ENCODE measurements at regions of chr13 and their contacts with region 1.

Region 1: DNA sequence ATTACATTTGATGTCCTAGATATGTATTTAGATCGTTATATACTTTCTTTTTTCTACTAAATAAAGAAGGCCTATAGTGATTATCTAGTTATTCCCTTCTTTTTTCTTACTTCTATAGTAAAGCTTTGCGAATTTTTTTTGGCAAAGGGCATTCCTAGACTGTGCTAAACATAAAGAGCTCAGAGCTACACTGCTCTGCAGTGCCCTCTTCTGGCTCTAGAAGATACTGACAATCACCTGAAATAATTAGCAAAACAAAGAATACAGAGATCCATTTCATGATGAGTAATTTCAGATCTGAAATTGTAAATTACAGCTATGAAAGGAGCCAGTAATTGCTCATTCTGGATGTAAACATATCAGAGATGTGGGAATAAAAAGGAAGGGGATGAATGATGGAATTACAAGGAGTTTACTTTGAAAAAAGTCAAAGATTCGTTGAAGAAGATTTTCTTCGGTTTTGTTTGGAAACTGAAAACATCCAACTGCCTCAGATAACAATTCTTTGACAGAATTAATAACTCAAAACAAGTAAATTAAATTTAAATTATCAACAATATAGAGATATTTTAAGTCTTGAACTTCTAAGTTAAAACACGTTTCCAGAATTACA is 288.5 kb downstream of the NALCN start:
- DNase-seq: no peak
- ATAC-seq: peak; percentile 87
- H3K4me3 Mint-ChIP-seq: no peak overlapping the region
- H3K27ac Mint-ChIP-seq: peak overlapping the region; percentile 82; the same call in 1 of the 2 replicates
- H3K4me1 Mint-ChIP-seq: peaks cover 23% of the 10 kb centered on the region
- H3K27me3 Mint-ChIP-seq: no peaks in the 10 kb centered on the region
- CTCF ChIP-seq: 0 out of 2 replicates have a peak, but pooled peaks have one; percentile 51

Region 2: GRCh38 chr13:100176801-100177400 is 950.9 kb before region 1 on chr13:
- CTCF ChIA-PET with region 1: no interaction called
- POLR2A ChIA-PET with region 1: no interaction called
- DNase-seq: no peak
- ATAC-seq: no peak
- H3K4me3 Mint-ChIP-seq: no peak overlapping the region
- H3K27ac Mint-ChIP-seq: no peak overlapping the region
- H3K4me1 Mint-ChIP-seq: peaks cover 46% of the 10 kb centered on the region
- H3K27me3 Mint-ChIP-seq: no peaks in the 10 kb centered on the region
- CTCF ChIP-seq: no peak

Region 3: GRCh38 chr13:101115762-101116171 is 12.1 kb before region 1 on chr13:
- CTCF ChIA-PET with region 1: interaction called, 11 read pairs
- POLR2A ChIA-PET with region 1: no interaction called
- DNase-seq: no peak
- ATAC-seq: peak; percentile 74
- H3K4me3 Mint-ChIP-seq: peak overlapping the region; percentile 6
- H3K27ac Mint-ChIP-seq: peak overlapping the region; percentile 80
- H3K4me1 Mint-ChIP-seq: peaks cover 77% of the 10 kb centered on the region
- H3K27me3 Mint-ChIP-seq: no peaks in the 10 kb centered on the region; the same call in 1 of the 2 replicates
- CTCF ChIP-seq: no peak

Measured in WTC11 (cell line).